Upper lobe of right lung (tissue), 1 donor: ENCODE measurements at regions of chr7 and their contacts with region 1.

Region 1: DNA sequence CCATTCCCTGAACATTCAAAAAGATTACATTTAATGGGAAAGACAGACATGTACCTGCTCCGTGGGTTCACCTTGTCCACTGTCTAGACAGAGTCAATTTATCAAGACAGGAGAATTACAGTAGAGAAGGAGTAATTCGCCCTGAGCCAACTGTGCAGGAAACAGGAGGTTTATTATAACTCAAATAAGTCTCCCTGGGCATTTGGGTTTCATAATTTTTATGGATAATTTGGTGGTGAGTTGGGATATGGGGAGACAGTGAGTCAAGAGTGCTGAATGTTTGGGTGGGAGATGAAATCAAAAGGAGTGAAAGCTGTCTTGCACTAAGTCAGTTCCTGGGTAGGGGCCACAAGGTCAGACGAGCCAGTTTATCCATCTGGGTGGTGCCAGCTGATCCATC is 165.9 kb upstream of the NAMPT start:
- DNase-seq: no peak
- ATAC-seq: no peak
- H3K4me3 ChIP-seq: no peak overlapping the region
- H3K27ac ChIP-seq: no peak overlapping the region
- H3K4me1 ChIP-seq: no peaks in the 10 kb centered on the region
- H3K27me3 ChIP-seq: no peaks in the 10 kb centered on the region
- CTCF ChIP-seq: no peak

Region 2: GRCh38 chr7:106294337-106294736 is 156.4 kb before region 1 on chr7:
- intact Hi-C with region 1: loop called (anchors 10 kb)
- DNase-seq: no peak
- ATAC-seq: no peak
- H3K4me3 ChIP-seq: no peak overlapping the region
- H3K27ac ChIP-seq: no peak overlapping the region
- H3K4me1 ChIP-seq: no peaks in the 10 kb centered on the region
- H3K27me3 ChIP-seq: no peaks in the 10 kb centered on the region
- CTCF ChIP-seq: no peak

Region 3: GRCh38 chr7:106313456-106313901 is 137.2 kb before region 1 on chr7:
- intact Hi-C with region 1: no loop called
- DNase-seq: no peak
- ATAC-seq: peak; percentile 45
- H3K4me3 ChIP-seq: no peak overlapping the region
- H3K27ac ChIP-seq: no peak overlapping the region
- H3K4me1 ChIP-seq: no peaks in the 10 kb centered on the region
- H3K27me3 ChIP-seq: no peaks in the 10 kb centered on the region
- CTCF ChIP-seq: no peak

Region 4: DNA sequence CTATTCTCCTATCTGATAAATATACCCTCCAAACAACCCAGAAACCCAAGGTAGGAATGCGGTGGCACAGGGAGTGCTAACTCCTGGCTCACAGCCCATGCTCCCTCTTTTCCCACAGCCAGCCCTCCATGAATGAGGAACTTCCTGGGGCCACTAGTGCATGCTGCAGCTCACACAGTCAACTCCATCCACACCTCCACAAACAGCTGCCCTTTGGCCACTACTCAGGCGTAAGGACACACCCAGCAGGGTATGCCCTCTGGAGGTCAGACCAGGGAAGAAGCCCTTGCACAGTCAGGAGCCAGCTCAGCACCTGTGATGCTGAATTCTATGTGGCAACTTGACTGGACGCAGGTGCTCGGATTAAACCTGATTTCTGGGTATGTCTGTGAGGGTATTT is 329.2 kb after region 1 on chr7:
- intact Hi-C with region 1: no loop called
- DNase-seq: no peak
- ATAC-seq: peak; percentile 73
- H3K4me3 ChIP-seq: no peak overlapping the region
- H3K27ac ChIP-seq: no peak overlapping the region
- H3K4me1 ChIP-seq: no peaks in the 10 kb centered on the region
- H3K27me3 ChIP-seq: no peaks in the 10 kb centered on the region
- CTCF ChIP-seq: no peak